ENCODE measurements at regions of chr17 and their contacts with region 1.

Region 1: GRCh38 chr17:62058626-62059025 is 6.5 kb downstream of the MED13 start:
- DNase-seq: no peak
- H3K4me3 ChIP-seq: no peak overlapping the region
- H3K27ac ChIP-seq: no peak overlapping the region
- H3K4me1 ChIP-seq: peaks cover 23% of the 10 kb centered on the region
- H3K27me3 ChIP-seq: no peaks in the 10 kb centered on the region
- CTCF ChIP-seq: no peak

Region 2: DNA sequence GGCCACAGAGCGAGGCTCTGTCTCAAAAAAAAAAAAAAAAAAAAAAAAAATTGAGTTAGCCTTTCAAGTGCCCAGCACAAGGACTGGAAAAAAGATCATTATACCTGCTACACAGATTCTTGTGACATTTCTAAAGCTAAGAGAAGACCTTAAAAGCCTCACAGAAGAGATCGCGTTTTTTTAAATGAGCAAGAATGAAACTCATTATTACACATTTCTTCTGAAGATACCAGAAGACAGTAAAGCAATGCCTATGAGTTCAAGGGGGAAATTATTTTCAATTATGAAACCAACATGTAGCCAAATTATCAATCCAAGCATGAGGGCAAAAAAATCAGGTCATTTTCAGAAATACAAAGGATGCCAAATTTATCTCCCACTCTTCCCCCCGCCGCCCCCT is 50.3 kb before region 1 on chr17:
- CTCF ChIA-PET with region 1: no interaction called
- POLR2A ChIA-PET with region 1: interaction called, 20 read pairs
- intact Hi-C with region 1: no loop called
- DNase-seq: no peak
- H3K4me3 ChIP-seq: no peak overlapping the region
- H3K27ac ChIP-seq: no peak overlapping the region
- H3K4me1 ChIP-seq: no peaks in the 10 kb centered on the region
- H3K27me3 ChIP-seq: no peaks in the 10 kb centered on the region
- CTCF ChIP-seq: no peak